MCF 10A (cell line): ENCODE measurements at regions of chr1 and their contacts with region 1.

Region 1: GRCh38 chr1:84122780-84123382 is 21.2 kb upstream of the PRKACB start:
- DNase-seq: peak; percentile 66
- H3K4me3 Mint-ChIP-seq: no peak overlapping the region
- H3K27ac Mint-ChIP-seq: no peak overlapping the region
- H3K4me1 Mint-ChIP-seq: no peaks in the 10 kb centered on the region
- H3K27me3 Mint-ChIP-seq: no peaks in the 10 kb centered on the region
- CTCF ChIP-seq: peak; percentile 70

Region 2: GRCh38 chr1:83905315-83905907 is 217.5 kb before region 1 on chr1:
- CTCF ChIA-PET with region 1: interaction called, 5 read pairs
- POLR2A ChIA-PET with region 1: no interaction called
- intact Hi-C with region 1: loop called (anchors 1 kb)
- DNase-seq: peak; percentile 38
- H3K4me3 Mint-ChIP-seq: no peak overlapping the region
- H3K27ac Mint-ChIP-seq: no peak overlapping the region
- H3K4me1 Mint-ChIP-seq: peaks cover 25% of the 10 kb centered on the region
- H3K27me3 Mint-ChIP-seq: no peaks in the 10 kb centered on the region
- CTCF ChIP-seq: peak; percentile 68

Region 3: DNA sequence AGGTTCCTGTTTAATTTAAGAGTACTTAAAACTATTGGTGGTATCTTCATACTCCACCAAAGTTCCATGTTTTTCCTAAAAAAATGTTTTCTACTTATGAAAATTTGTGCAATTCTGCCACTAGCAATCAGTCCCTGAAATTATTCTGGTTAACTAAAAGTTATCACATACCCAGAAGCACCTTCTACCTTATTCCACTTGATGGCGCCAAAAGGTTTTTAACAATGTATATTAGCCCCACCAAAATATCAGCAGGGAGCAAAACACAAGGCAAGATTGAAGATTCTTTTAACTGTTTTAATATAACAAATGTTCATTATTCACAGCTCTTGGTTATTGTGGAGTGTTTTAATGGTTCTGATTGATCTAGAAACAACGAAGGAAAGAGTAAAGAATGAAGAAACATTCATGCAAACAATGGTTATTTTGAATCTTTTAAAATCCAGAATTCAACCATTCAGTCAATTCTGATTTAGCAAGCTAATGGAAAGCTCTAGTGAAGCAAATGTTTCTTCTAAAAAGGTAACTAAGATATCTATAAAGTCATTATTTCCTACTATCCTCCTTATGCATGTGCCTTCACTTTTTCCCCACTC is 191.1 kb before region 1 on chr1:
- CTCF ChIA-PET with region 1: interaction called, 105 read pairs
- POLR2A ChIA-PET with region 1: no interaction called
- intact Hi-C with region 1: loop called (anchors 1 kb)
- DNase-seq: peak; percentile 68
- H3K4me3 Mint-ChIP-seq: no peak overlapping the region
- H3K27ac Mint-ChIP-seq: no peak overlapping the region
- H3K4me1 Mint-ChIP-seq: no peaks in the 10 kb centered on the region
- H3K27me3 Mint-ChIP-seq: no peaks in the 10 kb centered on the region
- CTCF ChIP-seq: peak; percentile 62

Region 4: GRCh38 chr1:83990749-83991148 is 132.1 kb before region 1 on chr1:
- CTCF ChIA-PET with region 1: interaction called, 11 read pairs
- POLR2A ChIA-PET with region 1: no interaction called
- intact Hi-C with region 1: loop called (anchors 2 kb)
- DNase-seq: peak; percentile 3
- H3K4me3 Mint-ChIP-seq: no peak overlapping the region
- H3K27ac Mint-ChIP-seq: no peak overlapping the region
- H3K4me1 Mint-ChIP-seq: no peaks in the 10 kb centered on the region
- H3K27me3 Mint-ChIP-seq: no peaks in the 10 kb centered on the region
- CTCF ChIP-seq: peak; percentile 11

Region 5: GRCh38 chr1:83998498-83999315 is 124.2 kb before region 1 on chr1 and contains the start of gene TTLL7:
- CTCF ChIA-PET with region 1: interaction called, 4 read pairs
- POLR2A ChIA-PET with region 1: interaction called, 4 read pairs
- intact Hi-C with region 1: loop called (anchors 2 kb)
- DNase-seq: peak; percentile 32
- H3K4me3 Mint-ChIP-seq: peak within 1 kb of the TSS; percentile 79
- H3K27ac Mint-ChIP-seq: peak within 1 kb of the TSS; percentile 85
- H3K4me1 Mint-ChIP-seq: no peaks in the 10 kb centered on the region
- H3K27me3 Mint-ChIP-seq: no peaks in the 10 kb centered on the region
- CTCF ChIP-seq: no peak
- total RNA-seq, gene TTLL7: 2.0 and 2.7 TPM in 2 replicates

Region 6: GRCh38 chr1:84077476-84078107 is 45.3 kb before region 1 on chr1:
- CTCF ChIA-PET with region 1: interaction called, 10 read pairs
- POLR2A ChIA-PET with region 1: interaction called, 3 read pairs
- intact Hi-C with region 1: loop called (anchors 2 kb)
- DNase-seq: peak; percentile 65
- H3K4me3 Mint-ChIP-seq: peak overlapping the region; percentile 86
- H3K27ac Mint-ChIP-seq: peak overlapping the region; percentile 83
- H3K4me1 Mint-ChIP-seq: peaks cover 11% of the 10 kb centered on the region
- H3K27me3 Mint-ChIP-seq: no peaks in the 10 kb centered on the region
- CTCF ChIP-seq: no peak